ENCODE measurements at regions of chr9 and their contacts with region 1.

Region 1: DNA sequence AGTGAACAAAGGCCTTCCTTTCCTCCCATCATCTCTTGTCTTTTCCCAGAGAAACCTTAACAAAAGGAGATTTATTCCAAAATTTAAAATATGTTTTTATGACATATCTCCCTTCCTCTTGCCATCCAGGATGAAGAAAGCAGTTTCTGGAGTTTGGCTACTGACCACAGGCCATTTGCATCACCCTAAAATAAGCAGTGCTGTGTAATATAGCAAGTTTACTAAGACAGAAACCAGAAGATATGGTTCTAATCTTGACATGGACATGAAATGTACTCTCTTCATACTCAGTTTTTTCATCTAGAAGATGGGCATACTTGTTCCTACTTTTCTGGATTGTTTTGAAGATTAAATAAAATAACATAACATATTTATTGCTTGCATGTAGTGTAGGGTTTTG is 50.2 kb upstream of the ZFAND5 start:
- DNase-seq: no peak
- ATAC-seq: no peak
- H3K4me3 ChIP-seq: no peak overlapping the region
- H3K27ac ChIP-seq: no peak overlapping the region
- H3K4me1 ChIP-seq: no peaks in the 10 kb centered on the region
- H3K27me3 ChIP-seq: no peaks in the 10 kb centered on the region
- CTCF ChIP-seq: no peak

Region 2: DNA sequence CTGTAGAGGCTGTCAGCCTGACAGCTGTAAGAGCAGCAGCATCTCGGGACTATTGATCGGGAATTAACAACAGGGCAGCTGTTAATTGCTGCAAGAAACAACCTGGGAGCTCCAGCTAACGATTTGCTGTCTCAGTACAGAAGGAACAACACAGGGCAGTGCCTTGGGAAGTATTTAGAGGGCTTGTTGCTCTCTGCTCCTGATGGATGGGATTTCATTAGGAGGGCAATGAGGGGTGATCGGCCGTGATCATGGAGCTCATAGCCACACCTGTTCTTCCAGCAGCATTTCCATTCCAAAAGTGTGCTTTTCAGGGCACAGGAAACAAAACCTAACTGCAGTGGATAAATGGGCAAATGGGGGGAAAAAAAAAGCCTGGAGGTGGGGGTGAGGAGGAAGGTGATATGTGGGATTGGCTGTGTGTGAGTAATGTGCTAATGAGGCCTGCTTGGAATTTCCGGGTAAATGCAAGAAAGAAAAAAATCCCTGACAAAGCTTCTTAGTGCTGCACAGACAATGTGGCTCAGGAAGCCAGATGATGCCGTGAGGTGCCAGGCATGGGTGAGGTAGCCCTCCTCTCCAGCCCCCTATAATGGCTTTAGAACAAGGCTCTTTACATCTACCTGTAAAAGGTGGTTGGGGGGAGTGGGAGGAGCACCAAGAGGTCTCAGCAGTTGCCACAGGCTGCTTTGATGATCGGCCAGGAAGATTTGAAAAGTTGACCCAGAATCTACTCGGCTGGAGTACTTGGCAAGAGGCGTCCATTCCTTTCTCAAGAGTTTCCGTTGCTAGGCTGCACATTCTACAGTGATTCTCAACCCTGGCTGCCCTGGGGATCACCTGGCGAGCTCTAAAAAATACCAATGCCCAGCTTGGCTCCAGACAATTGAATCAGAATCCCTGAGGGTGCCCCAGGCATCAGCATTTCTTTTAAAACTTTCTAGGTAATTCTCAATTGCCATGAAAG is 1861.2 kb before region 1 on chr9:
- intact Hi-C with region 1: no loop called
- DNase-seq: peak in 1 of 2 donors; percentile 19
- ATAC-seq: peak in 3 of 4 donors; percentile 48 to 65 (median 57)
- H3K4me3 ChIP-seq: no peak overlapping the region
- H3K27ac ChIP-seq: no peak overlapping the region
- H3K4me1 ChIP-seq: no peaks in the 10 kb centered on the region
- H3K27me3 ChIP-seq: no peaks in the 10 kb centered on the region
- CTCF ChIP-seq: no peak

Region 3: DNA sequence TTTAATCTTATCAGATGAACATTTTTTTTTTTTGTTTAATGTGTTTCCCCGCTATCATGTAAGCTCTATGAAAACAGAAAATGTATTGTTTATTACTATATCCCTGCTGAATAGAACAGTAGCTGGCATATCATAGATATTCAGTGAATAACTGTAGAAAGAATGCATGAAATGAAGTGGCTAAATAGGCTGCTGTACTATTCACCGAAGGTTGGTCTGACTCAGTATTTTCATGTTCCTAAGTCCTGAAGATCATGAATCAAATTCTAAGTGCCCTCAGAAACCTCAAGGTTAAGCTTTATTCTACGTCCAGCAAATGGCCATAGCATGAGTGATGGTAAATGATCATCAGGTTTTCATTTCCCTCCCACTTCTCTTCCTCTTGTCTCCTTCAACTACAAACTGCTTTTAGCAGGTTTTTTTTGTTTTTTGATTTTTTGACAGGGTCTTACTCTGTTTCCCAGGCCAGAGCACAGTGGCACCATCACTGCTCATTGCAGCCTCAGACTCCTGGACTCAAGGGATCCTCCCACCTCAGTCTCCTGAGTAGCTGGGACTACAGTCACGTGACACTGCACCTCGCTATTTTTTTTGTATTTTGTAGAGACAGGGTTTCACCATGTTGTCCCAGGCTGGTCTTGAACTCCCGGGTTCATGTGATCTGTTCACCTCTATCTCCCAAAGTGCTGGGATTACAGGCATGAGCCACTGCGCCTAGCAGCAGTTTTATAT is 31.0 kb before region 1 on chr9:
- intact Hi-C with region 1: no loop called
- DNase-seq: no peak
- ATAC-seq: no peak
- H3K4me3 ChIP-seq: no peak overlapping the region
- H3K27ac ChIP-seq: no peak overlapping the region
- H3K4me1 ChIP-seq: no peaks in the 10 kb centered on the region
- H3K27me3 ChIP-seq: no peaks in the 10 kb centered on the region
- CTCF ChIP-seq: no peak

Region 4: GRCh38 chr9:72443855-72444254 is 28.7 kb after region 1 on chr9:
- intact Hi-C with region 1: loop called in 1 of 2 experiments (anchors 1 kb)
- DNase-seq: no peak
- ATAC-seq: no peak
- H3K4me3 ChIP-seq: no peak overlapping the region
- H3K27ac ChIP-seq: no peak overlapping the region
- H3K4me1 ChIP-seq: no peaks in the 10 kb centered on the region
- H3K27me3 ChIP-seq: no peaks in the 10 kb centered on the region
- CTCF ChIP-seq: no peak

Region 5: GRCh38 chr9:72454871-72455491 is 39.8 kb after region 1 on chr9:
- intact Hi-C with region 1: no loop called
- DNase-seq: no peak
- ATAC-seq: no peak
- H3K4me3 ChIP-seq: no peak overlapping the region
- H3K27ac ChIP-seq: no peak overlapping the region
- H3K4me1 ChIP-seq: no peaks in the 10 kb centered on the region
- H3K27me3 ChIP-seq: no peaks in the 10 kb centered on the region
- CTCF ChIP-seq: no peak

Region 6: DNA sequence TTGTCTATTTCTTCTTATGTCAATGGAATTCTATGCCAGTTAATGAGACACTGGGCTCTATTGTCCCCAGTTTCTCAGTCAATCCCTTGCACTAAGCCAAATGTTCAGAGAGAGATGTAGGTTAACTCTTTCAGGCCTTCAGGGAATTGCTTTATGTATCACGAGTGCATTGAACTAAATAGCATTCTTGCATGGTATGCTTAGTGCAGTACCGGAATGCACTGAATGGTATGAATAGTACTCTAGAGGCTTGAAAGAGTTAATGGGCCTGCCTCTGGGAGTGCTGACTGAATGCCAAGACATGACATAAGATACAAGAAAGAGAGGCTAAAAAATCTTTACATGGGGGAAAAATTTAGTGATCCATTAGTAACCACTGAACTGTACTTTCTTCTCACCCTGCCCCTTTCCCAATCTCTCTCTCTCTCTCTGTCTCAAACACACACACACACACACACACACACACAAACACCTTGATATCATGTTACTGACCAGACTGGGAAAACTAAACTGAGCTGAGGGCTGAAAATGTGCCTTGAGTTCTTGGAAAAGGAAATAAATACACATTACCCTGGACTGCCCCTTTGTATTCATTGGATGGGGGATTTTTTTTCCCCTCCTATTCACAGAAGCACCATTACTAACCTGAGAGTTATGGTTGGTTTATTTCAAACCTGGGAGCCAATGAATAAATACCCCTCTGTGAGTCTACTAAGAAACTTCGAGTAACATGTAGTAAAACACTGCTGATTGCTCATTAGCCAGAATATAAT is 70.8 kb after region 1 on chr9:
- intact Hi-C with region 1: loop called in 1 of 2 experiments (anchors 10 kb)
- DNase-seq: no peak
- ATAC-seq: peak in 2 of 4 donors; percentile 65 to 71
- H3K4me3 ChIP-seq: no peak overlapping the region
- H3K27ac ChIP-seq: no peak overlapping the region
- H3K4me1 ChIP-seq: no peaks in the 10 kb centered on the region
- H3K27me3 ChIP-seq: no peaks in the 10 kb centered on the region
- CTCF ChIP-seq: no peak

Region 7: DNA sequence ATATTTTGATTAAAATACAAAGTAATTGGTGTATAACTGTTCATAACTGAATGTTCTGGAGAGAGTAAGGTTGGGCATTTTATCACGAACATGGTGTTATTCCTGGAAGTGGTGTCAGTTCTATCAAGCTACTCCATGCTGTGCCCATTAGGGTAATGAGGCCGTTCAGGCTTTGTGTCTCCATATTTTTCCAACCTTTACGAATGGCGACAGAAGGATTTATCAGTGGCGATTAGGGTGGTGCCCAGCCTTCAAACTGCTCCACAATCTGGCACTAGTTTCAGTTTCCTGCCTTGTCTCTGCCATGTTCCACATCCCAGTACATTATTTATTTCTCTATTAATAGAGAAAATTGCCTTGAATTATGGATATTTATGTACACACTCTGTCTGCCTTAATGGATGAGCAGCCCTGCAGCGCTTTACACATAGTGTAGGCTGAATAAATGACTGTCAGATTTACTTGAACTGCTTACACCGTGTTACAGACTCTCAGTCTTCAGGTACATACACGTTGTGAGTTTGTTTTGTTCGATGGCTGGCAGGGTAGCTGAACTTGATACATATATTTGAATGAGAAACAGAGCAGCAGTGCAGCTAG is 82.4 kb after region 1 on chr9:
- intact Hi-C with region 1: no loop called
- DNase-seq: no peak
- ATAC-seq: no peak
- H3K4me3 ChIP-seq: no peak overlapping the region
- H3K27ac ChIP-seq: no peak overlapping the region
- H3K4me1 ChIP-seq: no peaks in the 10 kb centered on the region
- H3K27me3 ChIP-seq: no peaks in the 10 kb centered on the region
- CTCF ChIP-seq: no peak

Measured in psoas muscle (tissue), 8 donors.